Heart left ventricle (tissue), 16 donors: ENCODE measurements at regions of chr7 and their contacts with region 1.

Region 1: GRCh38 chr7:22231811-22232210 is 125.1 kb downstream of the RAPGEF5 start:
- DNase-seq: no peak
- ATAC-seq: no peak
- H3K4me3 ChIP-seq: no peak overlapping the region
- H3K27ac ChIP-seq: no peak overlapping the region
- H3K4me1 ChIP-seq: peaks cover 0 to 11% (median 0%) of the 10 kb centered on the region in 12 donors
- H3K27me3 ChIP-seq: no peaks in the 10 kb centered on the region
- CTCF ChIP-seq: no peak
- POLR2A ChIP-seq: no peak

Region 2: GRCh38 chr7:22248111-22248809 is 16.4 kb after region 1 on chr7:
- intact Hi-C with region 1: loop called in 1 of 10 experiments (anchors 2 kb)
- DNase-seq: no peak
- ATAC-seq: peak in 1 of 4 donors; percentile 16
- H3K4me3 ChIP-seq: no peak overlapping the region
- H3K27ac ChIP-seq: peak overlapping the region in 9 of 12 donors; percentile 2 to 63 (median 24)
- H3K4me1 ChIP-seq: peaks cover 0 to 26% (median 0%) of the 10 kb centered on the region in 12 donors
- H3K27me3 ChIP-seq: no peaks in the 10 kb centered on the region
- CTCF ChIP-seq: no peak
- POLR2A ChIP-seq: no peak

Region 3: DNA sequence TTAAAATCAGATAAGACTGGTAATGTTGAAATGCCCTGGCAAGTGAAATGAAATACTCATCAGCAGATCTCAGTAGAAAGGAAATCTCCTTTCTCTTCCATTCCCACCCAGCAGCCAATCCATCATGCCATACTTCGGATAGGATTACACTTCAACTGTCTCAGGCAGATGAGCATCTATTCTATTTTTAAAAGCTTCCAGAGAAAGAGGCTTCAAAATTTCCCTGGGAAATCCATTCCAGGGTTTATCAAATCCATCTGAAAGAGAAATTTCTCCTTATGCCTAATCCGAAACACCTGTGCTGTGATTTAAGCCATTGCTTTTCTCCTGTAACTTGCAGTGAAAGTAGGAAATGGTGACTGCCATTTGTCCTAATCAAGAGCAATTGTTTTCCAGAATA is 185.5 kb after region 1 on chr7:
- intact Hi-C with region 1: no loop called
- DNase-seq: no peak
- ATAC-seq: no peak
- H3K4me3 ChIP-seq: no peak overlapping the region
- H3K27ac ChIP-seq: no peak overlapping the region
- H3K4me1 ChIP-seq: no peaks in the 10 kb centered on the region
- H3K27me3 ChIP-seq: no peaks in the 10 kb centered on the region
- CTCF ChIP-seq: no peak
- POLR2A ChIP-seq: no peak

Region 4: DNA sequence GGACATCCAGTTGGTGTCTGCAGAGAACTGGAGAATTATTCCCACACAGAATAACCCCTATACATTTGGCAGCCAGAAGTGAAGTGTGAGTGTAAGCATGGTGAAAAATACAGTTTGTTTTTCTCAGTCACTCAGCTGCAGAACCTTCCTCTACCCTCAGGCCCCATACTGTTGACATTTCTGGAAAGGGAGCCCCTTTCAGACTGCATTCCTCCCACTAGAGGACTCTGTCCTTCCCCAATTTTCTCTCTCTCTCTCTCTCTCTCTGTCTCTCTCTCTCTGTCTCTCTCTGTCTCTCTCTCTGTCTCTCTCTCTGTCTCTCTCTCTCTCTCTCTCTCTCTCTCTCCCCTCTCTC is 355.0 kb after region 1 on chr7:
- intact Hi-C with region 1: no loop called
- DNase-seq: no peak
- ATAC-seq: peak in 2 of 4 donors; percentile 32 to 34
- H3K4me3 ChIP-seq: no peak overlapping the region
- H3K27ac ChIP-seq: peak overlapping the region in 6 of 12 donors; percentile 1 to 28 (median 18)
- H3K4me1 ChIP-seq: peaks cover 0 to 78% (median 56%) of the 10 kb centered on the region in 12 donors
- H3K27me3 ChIP-seq: no peaks in the 10 kb centered on the region
- CTCF ChIP-seq: peak in 10 of 12 donors; percentile 18 to 57 (median 37)
- POLR2A ChIP-seq: no peak